ENCODE measurements at regions of chrX and their contacts with region 1.

Region 1: DNA sequence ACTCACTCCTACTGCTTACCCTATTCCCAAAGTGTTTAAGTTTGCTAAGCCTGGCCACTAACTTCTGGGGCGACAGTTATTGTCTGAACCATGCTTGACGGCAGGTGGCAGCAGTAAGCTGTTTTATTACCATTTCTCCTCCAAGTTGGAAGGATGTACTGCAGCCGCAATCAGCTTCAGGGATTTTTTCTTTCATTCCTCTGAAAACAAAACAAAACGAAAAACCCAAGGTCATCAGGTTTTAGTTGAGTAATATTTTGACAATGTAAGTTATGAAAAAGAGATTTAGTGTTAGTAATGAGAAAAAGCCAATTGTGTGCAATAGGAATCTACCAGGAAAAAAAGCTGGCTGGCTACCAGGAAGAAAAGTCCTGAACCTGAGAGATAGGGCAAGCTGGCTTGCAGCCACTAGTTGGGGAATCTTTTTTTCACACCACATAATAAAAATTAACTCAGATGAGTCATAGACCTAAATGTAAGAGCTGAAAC is 13.2 kb upstream of the RAB9B start:
- DNase-seq: peak; percentile 72
- H3K4me3 ChIP-seq: no peak overlapping the region
- H3K27ac ChIP-seq: no peak overlapping the region
- H3K4me1 ChIP-seq: no peaks in the 10 kb centered on the region
- H3K27me3 ChIP-seq: no peaks in the 10 kb centered on the region
- CTCF ChIP-seq: peak; percentile 45 to 63 (median 55)
- EP300 ChIP-seq: no peak
- POLR2A ChIP-seq: no peak

Region 2: DNA sequence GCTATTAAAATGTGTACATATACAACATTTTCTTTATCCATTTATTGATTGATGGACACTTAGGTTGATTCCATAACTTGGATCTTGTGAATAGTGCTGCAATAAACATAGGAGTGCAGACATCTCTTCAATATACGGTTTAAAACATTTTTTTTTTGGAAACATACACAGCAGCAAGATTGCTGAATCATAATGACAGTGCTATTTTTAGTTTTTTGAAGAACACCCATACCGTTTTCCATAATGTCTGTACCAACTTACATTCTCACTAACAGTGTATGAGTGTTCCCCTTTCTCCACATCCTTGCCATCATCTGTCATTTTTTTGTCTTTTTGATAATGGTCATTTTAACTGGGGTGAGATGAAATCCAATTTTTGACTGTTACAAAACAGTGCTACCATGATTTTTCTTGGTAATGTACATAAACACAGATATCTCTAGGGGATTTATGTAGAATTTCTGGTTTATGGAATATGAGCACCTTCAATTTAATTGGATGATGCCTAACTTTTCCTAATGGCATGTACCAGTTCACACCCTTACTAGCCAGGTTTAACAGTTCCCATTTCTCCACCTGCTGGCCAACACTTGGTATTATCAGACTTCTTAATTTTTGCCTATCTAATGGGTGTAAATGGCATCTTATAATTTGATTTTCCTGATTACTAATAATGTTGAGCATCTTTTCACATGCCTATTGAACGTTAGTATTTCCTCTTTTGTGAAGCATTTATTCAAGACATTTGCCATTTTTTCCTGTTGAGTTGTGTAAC is 96.2 kb after region 1 on chrX:
- in situ Hi-C with region 1: loop called in 3 of 4 experiments (anchors 25 kb)
- intact Hi-C with region 1: no loop called
- DNase-seq: no peak
- H3K4me3 ChIP-seq: no peak overlapping the region
- H3K27ac ChIP-seq: no peak overlapping the region
- H3K4me1 ChIP-seq: no peaks in the 10 kb centered on the region
- H3K27me3 ChIP-seq: no peaks in the 10 kb centered on the region
- CTCF ChIP-seq: peak; percentile 35 to 50 (median 40)
- EP300 ChIP-seq: no peak
- POLR2A ChIP-seq: no peak

Region 3: GRCh38 chrX:104136241-104137019 is 291.2 kb after region 1 on chrX:
- in situ Hi-C with region 1: loop called in 3 of 4 experiments (anchors 25 kb)
- intact Hi-C with region 1: no loop called
- DNase-seq: peak; percentile 67
- H3K4me3 ChIP-seq: peak overlapping the region in 2 of 4 donors; percentile 15 to 27
- H3K27ac ChIP-seq: peak overlapping the region in 2 of 4 donors; percentile 9 to 59
- H3K4me1 ChIP-seq: no peaks in the 10 kb centered on the region
- H3K27me3 ChIP-seq: no peaks in the 10 kb centered on the region
- CTCF ChIP-seq: peak; percentile 47 to 80 (median 64)
- EP300 ChIP-seq: no peak
- POLR2A ChIP-seq: no peak